ENCODE measurements at regions of chr5 and their contacts with region 1.

Region 1: DNA sequence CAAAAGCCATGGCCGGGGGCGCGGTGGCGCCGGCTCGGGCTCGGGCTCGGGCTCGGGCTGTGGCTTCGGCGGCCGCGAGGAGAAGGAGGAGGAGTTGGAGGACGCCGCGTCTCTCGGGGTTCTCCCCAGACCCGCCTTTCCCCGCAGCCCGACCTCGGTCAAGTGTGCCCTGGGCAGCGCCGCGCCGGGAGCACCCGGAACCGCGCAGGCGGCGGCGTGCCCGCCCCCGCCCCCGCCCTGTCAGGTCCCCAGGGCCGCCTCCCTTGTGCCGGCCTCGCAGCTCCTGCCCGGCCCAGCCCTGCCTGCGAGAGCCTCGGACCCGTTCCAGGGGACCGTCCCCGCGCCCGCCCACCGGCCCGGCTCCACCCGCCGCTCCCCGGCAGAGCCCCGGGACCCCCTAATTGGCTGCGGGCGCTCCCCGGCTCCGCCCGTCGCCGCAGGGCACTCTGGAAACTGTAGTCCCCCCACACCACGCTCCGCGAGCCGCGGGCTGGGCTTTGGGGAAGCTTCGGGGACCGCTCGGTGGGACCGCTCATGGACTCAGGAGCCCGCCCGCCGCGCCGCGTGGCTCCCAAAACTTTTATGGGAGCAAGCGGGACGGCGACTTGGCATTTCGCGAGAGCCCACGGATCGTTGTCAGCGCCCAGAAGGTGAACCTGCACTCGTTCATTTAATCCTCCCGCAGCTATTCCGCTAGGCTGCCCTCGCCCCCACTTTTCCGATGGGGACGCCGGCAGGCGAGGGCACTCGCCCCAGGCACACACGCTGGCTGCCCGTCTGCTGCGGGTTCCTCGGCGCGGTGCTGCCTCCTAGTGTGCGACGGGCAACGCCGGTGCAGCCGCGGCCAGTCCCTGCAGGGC is at the start of gene STK10:
- DNase-seq: peak; percentile 92
- H3K4me3 Mint-ChIP-seq: peak within 1 kb of the TSS; percentile 96
- H3K27ac Mint-ChIP-seq: peak within 1 kb of the TSS; percentile 91
- H3K4me1 Mint-ChIP-seq: peaks cover 24% of the 10 kb centered on the region
- H3K27me3 Mint-ChIP-seq: peaks cover 5% of the 10 kb centered on the region
- total RNA-seq, gene STK10: 301 to 316 TPM

Region 2: GRCh38 chr5:171907725-171908343 is 280.4 kb before region 1 on chr5:
- CTCF ChIA-PET with region 1: interaction called, 15 read pairs
- POLR2A ChIA-PET with region 1: no interaction called
- DNase-seq: peak; percentile 46
- H3K4me3 Mint-ChIP-seq: no peak overlapping the region
- H3K27ac Mint-ChIP-seq: no peak overlapping the region
- H3K4me1 Mint-ChIP-seq: peaks cover 44% of the 10 kb centered on the region
- H3K27me3 Mint-ChIP-seq: no peaks in the 10 kb centered on the region

Region 3: GRCh38 chr5:172059661-172060100 is 128.6 kb before region 1 on chr5:
- CTCF ChIA-PET with region 1: interaction called, 27 read pairs
- POLR2A ChIA-PET with region 1: interaction called, 6 read pairs
- DNase-seq: no peak
- H3K4me3 Mint-ChIP-seq: no peak overlapping the region
- H3K27ac Mint-ChIP-seq: peak overlapping the region; percentile 27
- H3K4me1 Mint-ChIP-seq: peaks cover 16% of the 10 kb centered on the region
- H3K27me3 Mint-ChIP-seq: no peaks in the 10 kb centered on the region

Region 4: DNA sequence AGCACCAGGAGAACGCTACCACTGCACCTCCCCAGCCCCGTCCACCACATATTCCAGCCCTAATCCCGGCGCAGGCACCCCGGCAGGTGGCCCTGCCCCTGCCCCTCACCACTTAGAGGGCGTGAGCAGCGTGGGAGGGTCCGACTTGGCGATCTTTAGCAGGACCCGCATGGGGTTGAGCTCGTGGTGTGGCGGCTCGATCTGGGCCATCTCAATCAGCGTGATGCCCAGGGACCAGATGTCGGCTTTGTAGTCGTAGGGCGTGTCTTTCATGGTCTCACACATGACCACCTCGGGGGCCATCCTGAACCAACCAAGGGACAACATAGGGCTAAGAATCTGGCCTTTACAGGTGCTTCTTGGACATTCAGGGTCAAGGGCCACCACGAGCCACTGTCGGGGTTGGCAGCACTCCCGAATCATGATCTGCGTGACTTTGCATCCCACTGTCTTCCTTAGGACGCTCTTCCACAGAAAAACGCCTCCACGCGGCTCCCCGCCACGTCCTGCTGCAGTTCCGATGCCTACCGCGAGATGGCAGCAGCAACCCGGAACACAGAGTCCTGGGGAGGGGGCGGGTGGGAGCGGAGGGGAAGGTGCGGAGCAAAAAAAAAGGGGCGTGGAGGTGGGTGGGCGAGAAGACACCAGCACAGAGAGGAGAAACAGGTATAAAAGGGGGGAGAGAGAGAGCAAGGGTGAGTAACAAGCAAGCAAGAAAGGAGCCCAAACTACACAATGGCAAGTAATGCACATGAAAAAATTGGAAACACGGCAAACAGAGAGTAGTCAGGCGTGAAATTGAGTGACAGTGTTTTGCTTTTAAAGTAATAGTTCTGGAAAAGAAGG is 81.5 kb before region 1 on chr5:
- CTCF ChIA-PET with region 1: interaction called, 135 read pairs
- POLR2A ChIA-PET with region 1: interaction called, 905 read pairs
- DNase-seq: peak; percentile 66
- H3K4me3 Mint-ChIP-seq: peak overlapping the region; percentile 21
- H3K27ac Mint-ChIP-seq: peak overlapping the region; percentile 71
- H3K4me1 Mint-ChIP-seq: peaks cover 76% of the 10 kb centered on the region
- H3K27me3 Mint-ChIP-seq: no peaks in the 10 kb centered on the region

Region 5: DNA sequence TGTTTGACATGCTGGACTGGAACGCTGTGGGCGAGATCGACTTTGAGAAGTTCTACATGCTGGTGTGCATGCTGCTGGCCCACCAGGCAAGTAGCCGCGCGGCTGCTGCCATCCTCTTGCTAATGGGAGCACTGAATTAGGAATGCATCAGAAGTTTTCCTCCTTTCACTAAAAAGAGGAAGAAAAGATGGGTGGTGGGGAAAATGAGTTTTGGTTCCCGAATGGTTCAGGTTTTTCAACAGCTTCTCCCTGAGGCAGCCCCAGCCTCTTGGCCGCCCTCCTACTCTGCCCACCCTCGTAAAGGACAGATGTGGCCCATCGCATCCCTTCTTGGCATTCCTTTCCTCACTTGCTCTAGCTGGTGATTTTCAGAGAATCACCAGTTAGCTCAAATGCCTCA is 11.2 kb after region 1 on chr5:
- CTCF ChIA-PET with region 1: interaction called, 26 read pairs
- POLR2A ChIA-PET with region 1: interaction called, 3 read pairs
- DNase-seq: no peak
- H3K4me3 Mint-ChIP-seq: no peak overlapping the region
- H3K27ac Mint-ChIP-seq: no peak overlapping the region
- H3K4me1 Mint-ChIP-seq: no peaks in the 10 kb centered on the region
- H3K27me3 Mint-ChIP-seq: peaks cover 15% of the 10 kb centered on the region